ENCODE measurements at regions of chr3 and their contacts with region 1.

Region 1: DNA sequence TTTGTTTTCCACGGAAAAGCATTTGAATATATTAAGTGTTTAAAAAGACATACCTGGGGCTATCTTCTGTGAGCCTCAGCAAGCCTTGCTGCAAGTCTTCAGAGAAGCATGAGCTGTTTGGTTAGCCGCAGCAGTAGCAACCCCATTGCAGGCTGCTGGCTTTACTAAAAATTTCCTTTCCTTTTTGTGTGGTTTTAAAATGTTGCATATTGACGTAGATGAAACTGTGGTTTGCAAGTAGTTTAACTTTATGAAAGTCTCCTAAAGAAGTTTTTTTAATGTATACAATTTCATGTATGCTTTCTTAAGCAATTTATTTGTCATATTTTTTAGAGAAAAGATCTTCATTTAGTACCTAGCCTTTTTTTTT is at the start of gene GPR171:
- DNase-seq: peak; percentile 93
- H3K4me3 Mint-ChIP-seq: peak within 1 kb of the TSS; percentile 89
- H3K27ac Mint-ChIP-seq: peak within 1 kb of the TSS; percentile 99
- H3K4me1 Mint-ChIP-seq: peaks cover 52% of the 10 kb centered on the region
- H3K27me3 Mint-ChIP-seq: no peaks in the 10 kb centered on the region
- total RNA-seq, gene GPR171: 159 and 164 TPM in 2 replicates

Region 2: GRCh38 chr3:150603153-150603979 is 599.7 kb before region 1 on chr3 and contains the start of gene SELENOT:
- intact Hi-C with region 1: loop called (anchors 5 kb)
- DNase-seq: peak; percentile 99
- H3K4me3 Mint-ChIP-seq: peak within 1 kb of the TSS; percentile 98
- H3K27ac Mint-ChIP-seq: peak within 1 kb of the TSS; percentile 99
- H3K4me1 Mint-ChIP-seq: peaks cover 50% of the 10 kb centered on the region
- H3K27me3 Mint-ChIP-seq: no peaks in the 10 kb centered on the region
- total RNA-seq, gene SELENOT: 127 and 135 TPM in 2 replicates

Region 3: DNA sequence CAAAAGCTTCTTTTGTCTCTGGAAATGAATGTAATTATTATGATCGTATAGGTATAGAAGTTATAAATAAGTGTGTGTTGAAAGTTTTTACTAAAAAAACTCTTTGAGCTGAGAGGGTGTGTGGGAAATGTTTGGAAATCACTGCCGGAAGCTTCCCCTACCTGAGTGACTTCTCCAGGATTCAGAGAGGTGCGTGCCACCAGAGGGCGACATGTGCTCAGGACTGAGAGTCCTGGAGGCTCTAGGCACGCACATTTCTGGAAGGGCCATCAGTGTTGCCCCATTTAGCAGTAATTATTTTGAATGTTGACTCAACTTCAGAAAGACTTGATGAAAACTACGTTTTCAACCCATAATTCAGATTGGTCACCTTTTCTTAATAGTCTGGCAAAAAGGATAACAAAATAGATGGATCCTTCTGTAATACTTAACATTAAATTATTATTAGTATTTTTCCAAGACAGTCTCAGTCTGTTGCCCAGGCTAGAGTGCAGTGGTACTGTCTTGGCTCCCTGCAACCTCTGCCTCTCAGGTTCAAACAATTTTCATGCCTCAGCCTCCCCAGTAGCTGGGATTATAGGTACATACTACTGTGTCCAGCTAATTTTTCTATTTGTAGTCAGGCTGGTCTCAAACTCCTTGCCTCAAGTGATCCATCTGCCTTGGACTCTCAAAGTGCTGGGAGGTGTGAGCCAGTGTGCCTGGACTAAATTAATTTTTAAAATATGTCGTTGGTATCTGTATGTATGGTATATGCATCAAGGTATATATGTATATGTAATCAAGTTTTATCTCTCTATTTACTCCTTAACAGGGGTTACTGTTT is 34.6 kb before region 1 on chr3:
- intact Hi-C with region 1: loop called (anchors 1 kb)
- DNase-seq: peak; percentile 94
- H3K4me3 Mint-ChIP-seq: no peak overlapping the region
- H3K27ac Mint-ChIP-seq: no peak overlapping the region
- H3K4me1 Mint-ChIP-seq: peaks cover 41% of the 10 kb centered on the region
- H3K27me3 Mint-ChIP-seq: peaks cover 1% of the 10 kb centered on the region

Region 4: GRCh38 chr3:151305101-151305750 is 102.2 kb after region 1 on chr3:
- intact Hi-C with region 1: loop called (anchors 1 kb)
- DNase-seq: peak; percentile 65
- H3K4me3 Mint-ChIP-seq: peak overlapping the region; percentile 13
- H3K27ac Mint-ChIP-seq: peak overlapping the region; percentile 80
- H3K4me1 Mint-ChIP-seq: peaks cover 50% of the 10 kb centered on the region
- H3K27me3 Mint-ChIP-seq: peaks cover 2% of the 10 kb centered on the region

Region 5: GRCh38 chr3:152268555-152269425 is 1065.8 kb after region 1 on chr3 and contains the start of gene MBNL1:
- intact Hi-C with region 1: loop called (anchors 2 kb)
- DNase-seq: peak; percentile 95
- H3K4me3 Mint-ChIP-seq: peak within 1 kb of the TSS; percentile 83
- H3K27ac Mint-ChIP-seq: peak within 1 kb of the TSS; percentile 94
- H3K4me1 Mint-ChIP-seq: peaks cover 47% of the 10 kb centered on the region
- H3K27me3 Mint-ChIP-seq: no peaks in the 10 kb centered on the region
- total RNA-seq, gene MBNL1: 296 and 298 TPM in 2 replicates

Measured in activated CD4-positive, alpha-beta T cell treated with anti-CD3 and anti-CD28 coated beads, Interleukin-2, amount 10 ng/mL, durations not matched to agents 24 days and 14 days (primary cell).